A549 (cell line): ENCODE measurements at regions of chr12 and their contacts with region 1.

Region 1: DNA sequence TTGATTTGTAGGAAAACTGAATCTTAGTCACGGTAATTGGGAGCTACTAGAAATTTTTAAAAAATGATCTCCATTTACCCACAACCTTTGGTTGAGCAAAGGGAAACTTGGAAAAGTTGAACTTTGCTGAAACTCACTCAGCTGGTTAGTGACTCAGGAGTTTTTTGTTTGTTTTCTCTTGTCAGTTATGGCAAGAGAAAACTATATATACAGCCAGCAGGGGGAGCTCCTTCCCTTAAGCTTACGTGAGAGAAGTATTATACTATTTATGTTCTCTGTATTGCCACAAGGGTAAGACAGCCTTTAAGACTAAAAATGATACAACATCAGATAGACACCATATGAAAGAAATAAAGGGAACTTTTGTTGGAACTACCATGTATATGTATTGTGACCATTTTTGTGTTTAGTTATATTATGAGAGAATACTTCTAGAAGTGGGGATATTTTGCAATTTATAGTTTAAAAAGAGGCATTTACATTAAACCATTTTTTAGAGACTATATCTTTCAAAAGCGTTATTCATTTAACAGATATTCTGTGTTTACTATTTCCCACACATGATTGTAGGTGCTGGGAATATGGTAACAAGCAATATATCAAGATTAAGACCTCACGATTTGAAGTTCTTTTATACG is 28.1 kb upstream of the TBC1D30 start:
- DNase-seq: peak; percentile 91 to 96
- ATAC-seq: peak; percentile 89 to 95
- H3K4me3 ChIP-seq: no peak overlapping the region
- H3K27ac ChIP-seq: peak overlapping the region; percentile 66 to 70; a peak in 5 of 6 replicates
- H3K4me1 ChIP-seq: peaks cover 24% of the 10 kb centered on the region
- CTCF ChIP-seq: peak; percentile 93
- EP300 ChIP-seq: no peak
- POLR2A ChIP-seq: no peak
- RAD21 ChIP-seq: peak; percentile 74 to 81

Region 2: DNA sequence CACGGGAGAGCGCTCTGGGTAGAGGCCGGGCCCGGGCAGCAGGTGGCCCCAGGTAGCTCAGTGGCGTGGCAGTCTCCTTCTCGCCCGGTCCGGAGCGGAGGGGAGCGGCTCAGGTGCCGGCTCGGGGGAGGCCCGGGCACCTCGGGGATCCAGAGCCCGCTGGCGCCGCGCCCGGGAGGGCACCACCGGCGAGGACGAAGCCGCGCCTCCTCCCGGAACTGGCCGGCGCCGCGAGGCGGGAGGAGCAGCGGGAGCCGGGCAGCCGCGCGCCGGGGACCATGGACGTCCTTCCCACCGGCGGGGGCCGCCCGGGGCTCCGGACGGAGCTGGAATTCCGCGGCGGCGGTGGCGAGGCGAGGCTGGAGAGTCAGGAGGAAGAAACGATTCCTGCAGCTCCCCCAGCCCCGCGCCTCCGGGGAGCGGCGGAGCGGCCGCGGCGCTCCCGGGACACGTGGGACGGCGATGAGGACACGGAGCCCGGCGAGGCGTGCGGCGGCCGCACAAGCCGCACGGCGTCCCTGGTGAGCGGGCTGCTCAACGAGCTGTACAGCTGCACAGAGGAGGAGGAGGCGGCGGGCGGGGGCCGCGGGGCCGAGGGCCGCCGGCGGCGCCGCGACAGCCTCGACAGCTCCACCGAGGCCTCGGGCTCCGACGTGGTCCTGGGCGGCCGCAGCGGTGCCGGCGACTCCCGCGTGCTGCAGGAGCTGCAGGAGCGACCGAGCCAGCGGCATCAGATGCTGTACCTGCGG is 15.6 kb before region 1 on chr12:
- CTCF ChIA-PET with region 1: interaction called, 33 read pairs
- POLR2A ChIA-PET with region 1: no interaction called
- DNase-seq: peak; percentile 33 to 44
- ATAC-seq: peak; percentile 86 to 88
- H3K4me3 ChIP-seq: peak overlapping the region; percentile 60
- H3K27ac ChIP-seq: peak overlapping the region; percentile 69 to 88; a peak in 5 of 6 replicates
- H3K4me1 ChIP-seq: peaks cover 8% of the 10 kb centered on the region; the same call in 2 of the 3 replicates
- CTCF ChIP-seq: no peak
- EP300 ChIP-seq: no peak
- POLR2A ChIP-seq: no peak
- RAD21 ChIP-seq: no peak